ENCODE measurements at regions of chr14 and their contacts with region 1.

Region 1: DNA sequence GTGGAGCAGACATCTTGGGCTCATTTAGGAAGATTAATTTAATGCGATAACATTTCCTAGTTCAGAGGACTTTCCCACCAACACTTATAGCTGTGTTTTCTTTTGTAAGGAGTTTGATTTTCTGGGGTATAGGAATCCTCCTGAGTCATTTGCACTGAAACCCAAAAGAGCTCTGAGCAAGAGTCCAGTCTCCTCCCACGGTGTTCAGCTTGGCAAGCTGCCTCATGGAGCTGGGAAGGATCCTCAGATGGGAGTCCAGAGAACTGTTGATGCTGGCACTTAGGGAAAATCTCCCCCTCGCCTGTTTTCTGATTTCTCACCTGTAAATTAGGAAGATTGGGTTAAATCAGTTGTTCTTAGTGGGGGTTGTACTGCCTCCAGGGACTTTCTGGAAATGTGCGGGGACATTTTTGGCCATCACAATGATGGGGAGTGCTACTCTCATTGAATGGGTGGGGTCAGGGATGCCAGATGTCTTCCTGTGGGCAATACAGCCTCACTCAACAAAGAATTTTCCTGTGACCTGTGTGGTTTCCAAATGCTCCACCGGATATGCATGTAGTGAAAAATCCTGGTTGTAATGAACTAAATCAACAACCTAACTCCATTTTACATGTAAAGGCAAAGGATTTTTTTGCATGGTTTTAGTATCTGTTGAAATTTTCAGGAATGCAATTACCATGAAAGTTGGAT is 150.6 kb downstream of the ADCK1 start:
- DNase-seq: peak in 8 of 10 donors; percentile 34 to 78 (median 60)
- H3K4me3 ChIP-seq: no peak overlapping the region
- H3K27ac ChIP-seq: no peak overlapping the region
- H3K27me3 ChIP-seq: no peaks in the 10 kb centered on the region
- CTCF ChIP-seq: no peak

Region 2: DNA sequence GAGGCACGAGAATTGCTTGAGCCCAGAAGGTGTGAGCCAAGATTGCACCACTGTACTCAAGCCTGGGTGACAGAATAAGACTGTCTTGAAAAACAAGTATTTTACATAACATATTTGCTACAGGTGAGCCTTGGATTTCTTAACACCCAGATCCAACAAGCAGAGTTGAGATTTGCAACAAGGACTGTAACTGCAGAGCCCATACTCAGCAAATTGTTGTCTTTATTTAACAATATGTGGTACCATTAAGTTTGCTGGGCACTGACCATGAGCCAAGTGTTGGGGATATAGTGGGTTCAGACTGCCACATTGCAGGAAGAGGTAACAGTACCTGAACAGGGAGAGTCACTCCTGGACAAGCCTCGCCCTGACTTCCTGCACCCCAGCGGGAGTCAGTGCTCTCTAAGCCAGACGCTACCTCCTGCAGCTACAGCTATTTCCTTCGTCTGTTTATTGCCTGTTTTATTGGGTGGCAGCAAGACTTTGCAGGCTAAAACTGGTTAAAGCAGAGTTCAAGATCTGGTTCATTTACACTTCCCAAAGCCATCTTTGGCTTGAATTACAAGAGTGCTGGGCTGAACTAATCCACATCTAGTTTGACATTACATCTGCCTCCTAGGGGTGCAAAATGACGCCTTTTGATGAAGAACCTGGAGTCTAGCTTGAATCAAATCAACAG is 480.2 kb before region 1 on chr14:
- intact Hi-C with region 1: no loop called
- DNase-seq: no peak
- H3K4me3 ChIP-seq: no peak overlapping the region
- H3K27ac ChIP-seq: no peak overlapping the region
- H3K27me3 ChIP-seq: no peaks in the 10 kb centered on the region
- CTCF ChIP-seq: no peak

Region 3: GRCh38 chr14:78767436-78767835 is 816.9 kb after region 1 on chr14:
- intact Hi-C with region 1: loop called in 1 of 2 experiments (anchors 10 kb)
- DNase-seq: no peak
- H3K4me3 ChIP-seq: no peak overlapping the region
- H3K27ac ChIP-seq: no peak overlapping the region
- H3K27me3 ChIP-seq: no peaks in the 10 kb centered on the region
- CTCF ChIP-seq: no peak